ENCODE measurements at regions of chr9 and their contacts with region 1.

Region 1: DNA sequence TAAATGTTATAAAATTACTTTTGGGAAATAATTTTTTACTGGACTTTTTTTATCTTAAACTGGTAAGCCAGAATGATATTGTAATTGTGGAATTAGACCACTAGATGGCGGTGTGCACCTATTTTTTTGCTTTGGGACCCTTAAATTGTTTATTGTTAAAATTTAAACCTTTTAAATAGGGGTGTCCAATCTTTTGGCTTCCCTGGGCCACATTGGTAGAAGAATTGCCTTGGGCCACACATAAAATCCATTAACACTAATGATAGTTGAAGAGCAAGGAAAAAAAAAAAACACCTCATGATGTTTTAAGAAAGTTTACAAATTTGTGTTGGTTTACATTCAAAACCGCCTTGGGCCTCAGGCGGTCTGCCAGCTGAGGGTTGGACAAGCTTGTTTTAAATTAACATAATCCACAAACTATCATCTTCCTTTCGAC is 28.4 kb upstream of the GADD45G start:
- H3K4me3 ChIP-seq: no peak overlapping the region
- H3K27ac ChIP-seq: no peak overlapping the region
- H3K4me1 ChIP-seq: no peaks in the 10 kb centered on the region
- CTCF ChIP-seq: no peak

Region 2: GRCh38 chr9:89497978-89498851 is 78.2 kb before region 1 on chr9 and contains the start of gene SEMA4D:
- CTCF ChIA-PET with region 1: no interaction called
- POLR2A ChIA-PET with region 1: no interaction called
- H3K4me3 ChIP-seq: peak within 1 kb of the TSS; percentile 68
- H3K27ac ChIP-seq: peak within 1 kb of the TSS; percentile 53; the same call in 1 of the 2 replicates
- H3K4me1 ChIP-seq: peaks cover 2% of the 10 kb centered on the region; the same call in 1 of the 2 replicates
- CTCF ChIP-seq: no peak

Region 3: DNA sequence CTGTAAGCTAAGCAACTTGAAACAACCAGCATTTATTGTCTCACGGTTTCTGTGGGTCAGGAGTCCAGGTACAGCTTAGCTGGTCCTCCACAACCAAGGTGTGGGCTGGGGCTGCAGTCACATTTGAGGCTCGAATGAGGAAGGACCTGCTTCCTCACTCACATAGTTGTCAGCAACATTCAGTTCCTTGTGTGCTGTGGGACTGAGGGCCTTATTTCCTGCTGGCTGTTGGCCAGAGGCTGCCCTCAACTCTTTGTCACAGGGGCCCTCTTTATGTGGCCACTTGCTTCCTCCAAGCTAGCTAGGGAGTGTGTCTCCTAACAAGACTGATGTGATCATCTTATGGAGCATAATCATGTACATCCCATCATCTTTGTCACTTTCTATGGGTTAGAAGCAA is 49.3 kb before region 1 on chr9:
- CTCF ChIA-PET with region 1: no interaction called
- POLR2A ChIA-PET with region 1: no interaction called
- H3K4me3 ChIP-seq: no peak overlapping the region
- H3K27ac ChIP-seq: no peak overlapping the region
- H3K4me1 ChIP-seq: no peaks in the 10 kb centered on the region
- CTCF ChIP-seq: no peak

Region 4: GRCh38 chr9:89564352-89564878 is 12.0 kb before region 1 on chr9:
- CTCF ChIA-PET with region 1: interaction called, 13 read pairs
- POLR2A ChIA-PET with region 1: no interaction called
- H3K4me3 ChIP-seq: no peak overlapping the region
- H3K27ac ChIP-seq: no peak overlapping the region
- H3K4me1 ChIP-seq: no peaks in the 10 kb centered on the region
- CTCF ChIP-seq: 0 out of 2 replicates have a peak, but pooled peaks have one; percentile 6

Region 5: GRCh38 chr9:89617668-89618505 is 41.5 kb after region 1 on chr9:
- CTCF ChIA-PET with region 1: no interaction called
- POLR2A ChIA-PET with region 1: no interaction called
- H3K4me3 ChIP-seq: no peak overlapping the region
- H3K27ac ChIP-seq: no peak overlapping the region
- H3K4me1 ChIP-seq: no peaks in the 10 kb centered on the region
- CTCF ChIP-seq: no peak

Region 6: DNA sequence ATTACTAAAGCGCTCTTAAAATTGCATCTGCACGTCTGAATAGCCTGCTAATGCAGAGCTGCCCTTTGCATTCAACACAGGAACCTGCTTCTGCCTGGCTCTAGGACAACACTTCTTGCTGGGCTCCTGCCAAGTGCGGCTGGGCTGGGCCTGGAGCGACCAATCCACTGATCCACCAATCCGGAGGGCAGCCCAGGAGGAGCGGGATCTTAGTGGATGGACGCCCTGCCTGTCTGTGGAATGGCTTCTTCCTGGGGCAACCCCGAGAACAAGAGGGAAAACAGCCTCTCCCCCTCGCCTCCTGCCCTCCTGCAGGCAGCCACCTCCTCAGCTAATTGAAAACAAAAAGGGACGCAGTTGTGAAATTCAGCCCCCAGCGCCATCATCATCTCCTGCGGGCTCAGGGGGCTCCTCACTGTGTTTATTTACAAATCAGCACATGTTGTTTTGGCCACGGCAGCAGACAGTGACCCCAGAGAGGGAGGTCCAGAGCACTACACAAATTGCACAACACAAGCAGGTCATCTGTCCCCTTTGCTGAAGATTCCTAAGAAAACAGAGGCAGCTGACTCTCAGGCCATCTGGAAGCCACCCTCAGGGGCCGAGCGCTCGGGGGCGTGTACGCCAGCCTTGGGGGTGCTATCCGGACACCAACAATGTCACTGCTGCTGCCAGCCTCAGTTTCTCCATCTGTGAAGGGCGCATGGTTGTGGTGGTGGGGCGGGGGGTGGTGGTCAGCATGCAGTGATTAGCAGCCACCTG is 85.7 kb after region 1 on chr9:
- CTCF ChIA-PET with region 1: no interaction called
- POLR2A ChIA-PET with region 1: no interaction called
- H3K4me3 ChIP-seq: peak overlapping the region; percentile 2; the same call in 1 of the 2 replicates
- H3K27ac ChIP-seq: peak overlapping the region; percentile 19; the same call in 1 of the 2 replicates
- H3K4me1 ChIP-seq: no peaks in the 10 kb centered on the region
- CTCF ChIP-seq: no peak

Region 7: GRCh38 chr9:90102292-90102901 is 526.0 kb after region 1 on chr9:
- CTCF ChIA-PET with region 1: interaction called, 13 read pairs
- POLR2A ChIA-PET with region 1: no interaction called
- H3K4me3 ChIP-seq: no peak overlapping the region
- H3K27ac ChIP-seq: no peak overlapping the region
- H3K4me1 ChIP-seq: no peaks in the 10 kb centered on the region; the same call in 1 of the 2 replicates
- CTCF ChIP-seq: peak; percentile 22; the same call in 1 of the 2 replicates